HepG2 (cell line): ENCODE measurements at regions of chr14 and their contacts with region 1.

Region 1: DNA sequence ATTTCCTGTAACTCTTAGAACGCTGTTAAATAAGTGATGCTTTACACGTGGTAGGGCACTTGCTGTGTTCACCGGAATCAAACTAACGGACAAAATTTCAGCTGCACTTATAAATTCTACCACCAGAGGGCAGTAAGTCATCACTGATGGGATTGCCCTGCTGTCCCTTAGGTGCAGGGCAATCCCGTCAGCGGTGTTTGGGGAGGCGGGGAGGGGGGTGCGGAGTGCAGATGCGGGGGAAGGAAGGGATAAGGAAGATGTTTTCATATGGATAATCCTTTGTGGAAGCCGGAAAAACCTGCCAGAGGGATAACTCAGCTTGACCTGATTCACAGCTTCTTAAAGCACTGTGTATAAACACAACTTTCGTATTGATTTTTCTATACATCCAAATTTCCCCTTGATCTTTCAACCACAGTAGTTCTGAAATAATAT is 21.7 kb upstream of the SLC10A1 start:
- DNase-seq: peak; percentile 68
- ATAC-seq: peak; percentile 94
- H3K4me3 ChIP-seq: no peak overlapping the region
- H3K27ac ChIP-seq: no peak overlapping the region
- H3K4me1 ChIP-seq: peaks cover 12% of the 10 kb centered on the region
- H3K27me3 ChIP-seq: no peaks in the 10 kb centered on the region; a peak in 1 of 5 replicates
- CTCF ChIP-seq: peak; percentile 88
- EP300 ChIP-seq: no peak
- POLR2A ChIP-seq: no peak
- RAD21 ChIP-seq: peak; percentile 96

Region 2: GRCh38 chr14:69715725-69716477 is 102.9 kb before region 1 on chr14:
- CTCF ChIA-PET with region 1: no interaction called
- POLR2A ChIA-PET with region 1: no interaction called
- in situ Hi-C with region 1: no loop called
- intact Hi-C with region 1: no loop called
- DNase-seq: no peak
- ATAC-seq: no peak
- H3K4me3 ChIP-seq: no peak overlapping the region
- H3K27ac ChIP-seq: no peak overlapping the region
- H3K4me1 ChIP-seq: peaks cover 63% of the 10 kb centered on the region
- H3K27me3 ChIP-seq: no peaks in the 10 kb centered on the region
- CTCF ChIP-seq: no peak
- EP300 ChIP-seq: no peak
- POLR2A ChIP-seq: no peak
- RAD21 ChIP-seq: no peak

Region 3: DNA sequence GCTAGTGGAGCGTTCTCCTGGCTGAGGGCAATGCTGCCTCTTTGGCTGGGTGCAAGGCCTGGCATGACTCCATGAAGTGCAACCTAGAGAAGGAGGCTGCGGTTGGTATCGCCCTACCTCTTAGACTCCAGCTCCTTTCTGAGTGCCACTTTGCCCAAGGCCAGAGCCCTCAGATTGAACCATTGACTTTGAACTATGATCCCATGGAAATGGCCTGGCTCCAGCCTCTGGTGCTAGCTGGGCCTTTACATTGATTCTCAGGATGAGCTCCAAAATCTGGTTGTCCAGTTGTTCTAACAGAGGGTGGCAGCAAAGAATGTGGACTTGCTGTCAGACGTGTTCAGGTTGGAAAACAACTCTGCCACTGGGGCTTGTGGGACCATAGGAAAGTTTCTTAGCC is 44.3 kb after region 1 on chr14:
- CTCF ChIA-PET with region 1: no interaction called
- POLR2A ChIA-PET with region 1: no interaction called
- in situ Hi-C with region 1: no loop called
- intact Hi-C with region 1: no loop called
- DNase-seq: peak; percentile 52
- ATAC-seq: peak; percentile 83
- H3K4me3 ChIP-seq: no peak overlapping the region
- H3K27ac ChIP-seq: no peak overlapping the region
- H3K4me1 ChIP-seq: peaks cover 37% of the 10 kb centered on the region
- H3K27me3 ChIP-seq: peaks cover 2 to 22% of the 10 kb centered on the region in 2 experiments; a peak in 2 of 5 replicates
- CTCF ChIP-seq: peak; percentile 79
- EP300 ChIP-seq: no peak
- POLR2A ChIP-seq: no peak
- RAD21 ChIP-seq: peak; percentile 78

Region 4: DNA sequence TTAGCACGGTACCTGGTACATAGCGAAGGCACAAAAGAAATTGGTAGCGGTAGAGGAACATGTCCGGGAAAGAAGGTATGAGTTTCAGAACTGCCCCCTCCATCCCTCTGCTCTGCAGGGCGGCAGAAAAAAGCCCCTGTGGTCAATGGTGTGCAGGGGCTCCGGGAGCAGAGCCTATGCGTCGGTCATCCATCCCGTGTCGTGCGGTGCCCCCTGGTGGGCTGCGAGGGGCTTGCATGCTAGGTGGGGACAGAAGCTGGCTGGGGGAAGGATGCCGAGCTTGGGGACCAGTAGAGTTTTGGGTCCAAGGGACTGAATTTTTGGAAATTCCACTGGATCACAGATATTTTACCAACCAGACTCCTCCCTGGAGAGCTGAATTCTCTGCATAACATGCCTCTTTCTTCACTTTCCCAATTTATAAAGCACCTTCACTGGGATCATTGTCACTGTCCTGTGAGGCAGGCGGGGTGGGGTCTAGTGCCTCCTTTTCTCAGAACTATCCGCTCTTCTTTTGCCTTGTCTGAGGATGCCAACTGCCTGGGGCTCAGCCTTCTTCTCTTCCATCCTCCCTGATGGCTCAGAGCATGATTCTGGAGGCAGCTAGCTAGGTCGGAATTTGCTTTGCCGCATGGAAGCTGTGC is 209.1 kb after region 1 on chr14:
- CTCF ChIA-PET with region 1: interaction called, 45 read pairs
- POLR2A ChIA-PET with region 1: no interaction called
- in situ Hi-C with region 1: loop called (anchors 5 kb)
- intact Hi-C with region 1: loop called (anchors 1 kb)
- DNase-seq: peak; percentile 43
- ATAC-seq: peak; percentile 87
- H3K4me3 ChIP-seq: no peak overlapping the region
- H3K27ac ChIP-seq: no peak overlapping the region
- H3K4me1 ChIP-seq: peaks cover 9% of the 10 kb centered on the region
- H3K27me3 ChIP-seq: no peaks in the 10 kb centered on the region
- CTCF ChIP-seq: peak; percentile 94
- EP300 ChIP-seq: no peak
- POLR2A ChIP-seq: no peak
- RAD21 ChIP-seq: peak; percentile 96